K562 (cell line): ENCODE measurements at regions of chr2 and their contacts with region 1.

Region 1: DNA sequence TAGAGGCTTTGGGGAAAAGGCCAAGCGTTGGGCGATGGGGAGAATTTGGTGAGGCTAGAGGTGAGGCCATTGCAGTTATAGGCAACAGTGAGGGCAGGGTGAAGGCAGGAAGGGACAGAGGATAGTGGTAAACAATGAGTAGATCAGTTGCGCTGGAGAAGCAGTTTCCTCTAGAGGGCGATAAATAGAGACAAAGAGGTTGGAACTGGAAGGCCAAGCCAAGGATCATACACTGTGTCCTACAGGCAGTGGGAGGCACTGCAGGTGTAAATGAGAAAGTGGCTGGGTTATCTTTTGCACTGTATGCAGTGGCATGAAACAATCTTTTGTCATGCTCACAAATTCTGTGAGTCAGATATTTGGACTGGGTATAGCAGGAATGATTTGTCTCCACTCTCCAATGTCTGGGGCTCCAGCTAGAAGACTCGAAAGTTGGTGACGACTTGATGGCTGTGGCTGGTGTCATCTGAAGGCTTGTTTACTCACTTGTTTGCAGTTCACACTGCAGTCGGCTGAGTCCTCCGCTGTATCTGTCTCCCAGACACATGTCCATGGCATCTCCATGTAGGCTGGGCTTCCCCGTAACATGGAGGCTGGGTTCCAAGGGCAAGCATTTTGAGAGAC is 82.1 kb downstream of the TNP1 start:
- DNase-seq: peak; percentile 72 to 85 (median 76)
- ATAC-seq: peak; percentile 89
- H3K4me3 ChIP-seq: no peak overlapping the region
- H3K27ac ChIP-seq: no peak overlapping the region
- H3K4me1 ChIP-seq: peaks cover 15 to 33% of the 10 kb centered on the region in 2 experiments; a peak in 4 of 5 replicates
- H3K27me3 ChIP-seq: no peaks in the 10 kb centered on the region
- CTCF ChIP-seq: peak; percentile 92 to 99 (median 99)
- EP300 ChIP-seq: 0 out of 2 replicates have a peak, but pooled peaks have one; percentile 8
- POLR2A ChIP-seq: no peak
- RAD21 ChIP-seq: peak; percentile 84 to 90

Region 2: GRCh38 chr2:216880509-216881184 is 102.9 kb after region 1 on chr2:
- CTCF ChIA-PET with region 1: no interaction called
- POLR2A ChIA-PET with region 1: no interaction called
- in situ Hi-C with region 1: no loop called
- intact Hi-C with region 1: loop called (anchors 1 kb)
- DNase-seq: peak; percentile 53 to 93 (median 72)
- ATAC-seq: peak; percentile 92
- H3K4me3 ChIP-seq: no peak overlapping the region
- H3K27ac ChIP-seq: peak overlapping the region; percentile 78
- H3K4me1 ChIP-seq: peaks cover 41 to 49% of the 10 kb centered on the region in 2 experiments
- H3K27me3 ChIP-seq: no peaks in the 10 kb centered on the region
- CTCF ChIP-seq: no peak
- EP300 ChIP-seq: peak; percentile 88
- POLR2A ChIP-seq: peak; percentile 54
- RAD21 ChIP-seq: no peak

Region 3: DNA sequence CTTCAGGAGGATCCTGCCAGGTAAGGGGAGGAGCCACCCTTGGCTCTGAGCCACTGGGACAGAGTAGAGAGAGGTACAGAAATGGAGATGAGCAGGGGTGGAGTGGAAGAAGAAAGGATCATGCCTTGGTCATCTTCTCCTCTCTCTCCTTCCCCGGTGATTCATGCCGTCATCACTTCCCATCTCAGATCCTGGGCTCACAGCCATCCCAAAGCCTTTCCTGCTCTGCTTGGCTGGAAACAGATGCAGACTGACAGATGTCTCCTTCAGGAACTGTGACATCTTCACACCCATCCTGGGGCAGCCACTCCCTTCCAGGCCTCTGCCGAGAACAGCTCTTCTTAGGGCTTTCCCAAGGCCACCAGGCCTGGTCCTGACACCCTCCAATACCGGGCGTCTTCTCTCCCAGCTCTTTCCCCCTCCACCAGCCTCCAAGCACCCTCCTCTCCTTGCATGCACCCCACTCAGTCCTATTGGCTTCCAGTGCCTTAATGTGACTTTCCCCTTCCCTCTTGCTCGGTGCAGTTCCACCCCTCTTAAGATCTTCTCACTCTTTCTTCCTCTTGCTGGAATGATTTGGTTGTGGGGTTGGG is 140.4 kb after region 1 on chr2:
- CTCF ChIA-PET with region 1: no interaction called
- POLR2A ChIA-PET with region 1: no interaction called
- in situ Hi-C with region 1: no loop called
- intact Hi-C with region 1: loop called (anchors 10 kb)
- DNase-seq: no peak
- ATAC-seq: no peak
- H3K4me3 ChIP-seq: no peak overlapping the region
- H3K27ac ChIP-seq: no peak overlapping the region
- H3K4me1 ChIP-seq: peaks cover 0 to 3% of the 10 kb centered on the region in 2 experiments; a peak in 1 of 5 replicates
- H3K27me3 ChIP-seq: peaks cover 0 to 29% of the 10 kb centered on the region in 2 experiments; a peak in 3 of 5 replicates
- CTCF ChIP-seq: no peak
- EP300 ChIP-seq: no peak
- POLR2A ChIP-seq: no peak
- RAD21 ChIP-seq: no peak